Activated CD4-positive, alpha-beta T cell treated with anti-CD3 and anti-CD28 coated beads for 36 hours (primary cell): ENCODE measurements at regions of chr10 and their contacts with region 1.

Region 1: DNA sequence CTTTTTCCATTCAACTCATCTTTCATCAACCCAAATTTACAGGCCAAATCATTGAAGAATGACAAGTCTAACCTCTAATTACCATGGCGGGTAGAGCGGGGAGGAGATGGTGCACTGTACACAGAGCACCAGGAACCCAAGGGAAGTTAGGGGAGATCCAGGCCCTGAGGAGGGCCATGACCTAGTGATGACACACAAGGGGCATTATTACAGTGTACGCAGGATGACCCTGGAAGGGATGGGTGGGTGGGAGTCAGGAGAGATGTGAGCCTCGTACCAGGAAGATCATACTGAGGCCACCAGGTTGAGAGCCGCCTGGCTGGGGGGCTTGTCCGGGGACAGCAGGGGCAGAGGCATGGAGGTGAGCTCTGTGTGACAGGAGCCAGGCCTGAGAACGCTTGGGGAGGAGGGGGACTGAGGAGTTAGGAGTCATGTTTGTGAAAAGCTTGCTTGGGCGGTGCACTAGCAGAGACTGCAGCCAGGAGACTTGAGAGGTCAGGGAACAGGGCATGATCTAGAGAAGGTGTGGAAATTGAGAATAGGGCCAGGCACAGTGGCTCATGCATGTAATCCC is 89.5 kb upstream of the CCNY start:
- DNase-seq: no peak
- ATAC-seq: no peak
- H3K4me3 Mint-ChIP-seq: no peak overlapping the region
- H3K27ac Mint-ChIP-seq: no peak overlapping the region
- H3K4me1 Mint-ChIP-seq: no peaks in the 10 kb centered on the region
- H3K27me3 Mint-ChIP-seq: no peaks in the 10 kb centered on the region

Region 2: GRCh38 chr10:35598384-35598783 is 351.5 kb after region 1 on chr10:
- CTCF ChIA-PET with region 1: no interaction called
- POLR2A ChIA-PET with region 1: no interaction called
- intact Hi-C with region 1: loop called in 1 of 2 experiments (anchors 10 kb)
- DNase-seq: no peak
- ATAC-seq: no peak
- H3K4me3 Mint-ChIP-seq: no peak overlapping the region
- H3K27ac Mint-ChIP-seq: no peak overlapping the region
- H3K4me1 Mint-ChIP-seq: no peaks in the 10 kb centered on the region
- H3K27me3 Mint-ChIP-seq: peaks cover 14% of the 10 kb centered on the region